Right ventricle myocardium inferior (tissue), 1 donor: ENCODE measurements at regions of chr9 and their contacts with region 1.

Region 1: DNA sequence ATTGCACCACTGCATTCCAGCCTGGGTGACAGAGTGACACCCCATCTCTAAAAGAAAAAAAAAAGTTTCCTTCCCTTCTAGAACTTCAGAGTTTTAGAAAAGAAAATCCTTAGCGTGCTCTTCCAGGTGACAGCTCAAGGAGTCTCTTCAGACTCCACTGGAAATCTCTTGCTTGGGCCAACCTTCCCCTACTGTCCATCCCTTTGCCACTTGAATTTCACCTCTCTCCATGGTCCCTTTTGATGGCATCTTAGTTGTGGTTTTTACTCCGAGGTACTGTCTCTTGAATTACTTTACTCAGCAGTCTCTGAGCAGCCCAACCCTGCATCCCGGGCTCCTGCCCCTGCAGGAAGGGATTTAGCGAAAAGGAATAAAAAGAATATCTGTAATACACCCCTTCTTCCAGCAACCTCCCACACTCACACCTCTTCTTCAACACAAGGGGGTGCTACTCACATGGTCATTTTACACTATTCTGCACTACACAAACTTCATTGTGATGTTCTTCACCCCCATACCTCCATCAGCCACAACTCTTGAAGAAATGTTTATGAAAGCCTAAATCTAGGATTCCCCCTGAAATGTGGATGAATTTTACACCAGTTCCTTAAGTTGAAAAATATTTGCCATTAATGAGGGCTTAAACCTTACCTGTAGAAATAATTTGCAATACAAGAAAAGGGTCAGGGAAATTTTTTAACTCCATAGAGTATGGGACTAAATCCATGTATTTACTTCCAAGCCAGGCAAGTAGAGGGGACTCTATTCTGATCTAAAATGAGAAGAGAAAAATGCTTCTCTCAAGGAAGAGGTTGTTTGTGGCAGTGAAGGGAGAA is 25.9 kb downstream of the TPD52L3 start:
- DNase-seq: no peak
- ATAC-seq: peak; percentile 70

Region 2: GRCh38 chr9:5375091-5375490 is 979.0 kb before region 1 on chr9:
- intact Hi-C with region 1: no loop called
- DNase-seq: no peak
- ATAC-seq: no peak

Region 3: DNA sequence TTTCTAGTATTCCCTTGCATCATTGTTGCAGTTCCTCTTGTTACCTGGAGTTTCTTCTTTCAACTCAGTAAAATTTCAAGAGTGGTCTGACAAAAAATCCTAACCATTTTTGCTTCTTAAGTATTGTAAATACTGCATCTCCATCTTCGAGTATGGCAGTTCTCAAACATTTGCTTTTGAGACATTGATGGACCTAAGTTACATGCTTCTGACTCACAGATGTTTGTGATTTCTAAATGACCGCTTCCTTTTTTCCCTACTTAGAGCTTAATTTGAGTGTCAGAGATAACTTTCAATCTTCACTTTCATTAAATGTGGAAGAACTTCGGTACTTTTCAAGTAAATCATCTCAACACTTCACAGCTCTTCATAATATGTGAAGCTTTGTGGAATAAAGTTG is 63.1 kb after region 1 on chr9:
- intact Hi-C with region 1: no loop called
- DNase-seq: no peak
- ATAC-seq: no peak

Region 4: DNA sequence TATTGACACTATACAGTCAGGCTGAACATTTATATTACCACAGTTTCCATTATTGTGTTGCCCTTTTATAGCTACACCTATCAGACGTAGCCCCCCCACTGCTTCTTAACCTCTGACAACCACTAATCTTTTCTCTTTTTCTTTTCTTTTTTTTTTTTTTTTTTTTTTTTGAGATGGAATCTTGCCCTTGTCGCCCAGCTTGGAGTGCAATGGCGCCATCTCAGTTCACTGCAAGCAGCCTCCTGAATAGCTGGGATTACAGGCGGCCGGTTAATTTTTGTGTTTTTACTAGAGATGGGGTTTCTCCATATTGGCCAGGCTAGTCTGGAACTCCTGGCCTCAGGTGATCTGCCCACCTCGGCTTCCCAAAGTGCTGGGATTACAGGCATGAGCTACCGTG is 134.3 kb after region 1 on chr9:
- intact Hi-C with region 1: no loop called
- DNase-seq: no peak
- ATAC-seq: no peak

Region 5: DNA sequence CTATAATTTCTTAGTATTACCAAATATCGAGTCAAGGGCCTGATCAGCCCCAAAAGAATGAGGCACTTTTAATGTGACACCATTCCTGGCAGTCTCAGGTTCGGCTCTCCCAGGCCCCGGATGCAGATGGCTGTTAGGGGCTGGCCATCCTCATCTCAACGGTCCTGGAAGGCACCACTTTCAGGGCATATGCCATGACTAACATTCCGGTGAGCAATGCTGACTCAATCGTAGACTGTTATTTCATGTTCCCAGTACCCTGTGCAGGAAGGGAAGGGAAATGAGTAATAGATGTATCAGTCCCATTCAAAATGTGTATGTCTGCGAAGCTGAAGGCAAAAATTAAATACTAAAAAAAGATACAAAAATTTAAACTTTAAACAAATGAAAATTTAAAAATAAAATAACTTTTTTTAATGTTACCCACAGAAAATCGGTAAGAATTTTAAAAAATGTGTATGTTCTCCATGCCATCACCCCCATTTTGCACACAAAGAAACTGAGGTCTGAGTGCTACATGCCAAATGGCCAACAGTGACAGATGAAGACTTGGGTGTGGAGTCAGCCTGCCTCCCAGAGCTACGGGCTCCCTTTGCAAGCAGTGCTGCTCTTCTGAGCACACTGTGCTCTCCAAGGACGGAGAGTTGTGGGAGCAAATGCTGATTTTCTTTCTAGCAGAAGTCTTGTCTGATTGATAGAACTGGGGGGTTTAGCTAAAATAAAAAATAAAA is 212.5 kb after region 1 on chr9:
- intact Hi-C with region 1: loop called (anchors 2 kb)
- DNase-seq: no peak
- ATAC-seq: no peak

Region 6: GRCh38 chr9:6667633-6668280 is 313.7 kb after region 1 on chr9:
- intact Hi-C with region 1: loop called (anchors 5 kb)
- DNase-seq: no peak
- ATAC-seq: no peak